GM10248 (cell line): ENCODE measurements at regions of chr1 and their contacts with region 1.

Region 1: GRCh38 chr1:16366722-16367257 is at the start of gene SZRD1:
- DNase-seq: peak; percentile 91
- CTCF ChIP-seq: no peak

Region 2: GRCh38 chr1:16351994-16352841 is 14.6 kb before region 1 on chr1 and contains the start of gene FBXO42:
- CTCF ChIA-PET with region 1: interaction called, 70 read pairs
- POLR2A ChIA-PET with region 1: interaction called, 10 read pairs
- DNase-seq: peak; percentile 95
- CTCF ChIP-seq: peak; percentile 56

Region 3: DNA sequence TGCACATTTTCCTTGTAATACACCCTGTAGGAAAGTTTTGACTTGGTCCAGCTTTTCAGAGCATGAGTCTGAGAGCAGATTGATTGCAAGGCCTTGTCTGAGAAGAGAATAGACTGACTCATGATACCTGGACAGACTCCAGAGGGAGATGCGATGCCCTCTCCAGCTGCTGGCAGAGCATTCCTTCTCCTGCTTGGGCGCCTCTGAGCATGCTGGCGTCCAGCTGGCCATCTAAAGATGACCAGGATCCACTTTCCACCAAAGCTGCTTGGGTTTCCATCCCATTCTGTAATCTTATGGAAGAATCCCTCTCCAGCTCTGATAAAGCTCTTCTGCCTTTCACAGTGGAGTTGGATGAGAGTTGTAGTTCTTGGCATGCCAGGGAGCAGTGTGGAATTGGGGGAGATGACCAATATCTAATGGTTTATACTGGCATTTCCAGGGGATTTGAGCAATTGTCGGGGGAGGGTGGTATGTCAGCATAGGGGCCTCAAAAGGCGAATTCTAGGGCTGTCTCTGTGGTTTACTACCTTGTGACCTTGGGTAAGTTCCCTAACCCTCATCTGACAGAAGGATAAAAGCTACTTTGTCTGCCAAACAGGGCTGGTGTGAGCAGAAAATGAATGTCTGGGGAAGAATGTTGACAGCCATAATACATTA is 19.8 kb after region 1 on chr1:
- CTCF ChIA-PET with region 1: interaction called, 4 read pairs
- POLR2A ChIA-PET with region 1: interaction called, 10 read pairs
- DNase-seq: no peak
- CTCF ChIP-seq: no peak

Region 4: GRCh38 chr1:16440470-16441281 is 73.9 kb after region 1 on chr1 and contains the start of gene NECAP2:
- CTCF ChIA-PET with region 1: interaction called, 13 read pairs
- POLR2A ChIA-PET with region 1: no interaction called
- DNase-seq: peak; percentile 92
- CTCF ChIP-seq: peak; percentile 96